ENCODE measurements at regions of chr3 and their contacts with region 1.

Region 1: DNA sequence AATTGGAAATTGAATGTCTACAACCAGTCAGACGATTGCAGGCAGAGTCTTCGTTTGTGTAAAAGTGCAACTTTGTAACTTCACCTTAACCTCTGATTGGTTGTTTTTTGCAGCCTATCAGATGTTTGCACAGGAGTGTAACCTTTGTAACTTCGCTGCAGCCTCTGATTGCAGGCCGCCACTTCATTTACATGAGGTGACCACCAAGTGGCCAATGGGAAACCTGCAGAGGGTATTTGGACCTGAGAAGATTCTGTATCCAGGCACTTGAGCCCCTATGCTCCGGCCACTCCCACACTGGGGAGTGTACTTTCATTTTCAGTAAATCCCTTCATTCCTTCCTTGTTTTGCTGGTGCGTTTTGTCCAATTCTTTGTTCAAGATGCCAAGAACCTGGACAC is 68.1 kb upstream of the PFN2 start:
- DNase-seq: no peak
- H3K4me3 ChIP-seq: no peak overlapping the region
- H3K27ac ChIP-seq: no peak overlapping the region
- H3K4me1 ChIP-seq: no peaks in the 10 kb centered on the region
- H3K27me3 ChIP-seq: no peaks in the 10 kb centered on the region
- CTCF ChIP-seq: no peak

Region 2: DNA sequence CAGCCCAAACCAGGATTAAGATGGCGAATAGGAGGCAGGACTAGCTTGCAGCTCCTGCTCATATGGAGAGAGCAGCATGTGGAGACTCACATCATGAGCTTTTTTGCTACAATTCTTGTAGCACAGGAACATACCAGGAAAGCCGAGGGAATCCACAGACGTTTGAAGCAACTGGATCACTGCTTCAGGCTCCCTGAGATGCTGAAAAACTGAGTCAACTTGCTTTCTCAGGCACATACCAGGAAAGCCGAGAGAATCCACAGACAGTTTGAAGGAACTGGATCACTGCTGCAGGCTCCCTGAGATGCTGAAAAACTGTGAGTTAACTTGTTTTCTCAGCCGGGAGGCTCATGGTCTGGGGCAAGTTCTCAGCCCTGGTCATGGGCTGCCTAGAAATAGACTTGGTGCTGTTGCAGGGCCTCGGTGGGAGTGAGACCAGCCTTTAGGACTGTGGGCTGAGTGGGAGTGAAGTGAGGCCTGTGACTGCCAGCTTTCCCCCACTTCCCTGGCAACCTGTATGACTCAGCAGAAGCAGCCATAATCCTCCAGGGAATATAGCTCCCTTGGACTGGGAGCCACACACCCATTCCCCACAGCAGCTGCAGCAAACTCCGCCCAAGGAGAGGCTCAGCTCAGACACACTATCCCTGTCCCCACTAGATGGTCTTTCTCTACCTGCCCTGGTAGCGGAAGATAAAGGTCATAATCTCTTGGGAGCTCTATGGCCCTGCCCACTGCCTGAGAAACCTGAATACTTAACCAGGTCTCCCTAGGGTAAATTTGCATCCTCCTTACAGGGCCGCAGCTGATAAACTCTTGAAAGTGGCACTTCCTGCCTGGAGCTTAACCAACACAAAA is 16.2 kb before region 1 on chr3:
- CTCF ChIA-PET with region 1: no interaction called
- dilution Hi-C with region 1: no loop called
- in situ Hi-C with region 1: no loop called
- intact Hi-C with region 1: loop called (anchors 2 kb)
- DNase-seq: peak; percentile 10
- H3K4me3 ChIP-seq: no peak overlapping the region
- H3K27ac ChIP-seq: no peak overlapping the region
- H3K4me1 ChIP-seq: no peaks in the 10 kb centered on the region
- H3K27me3 ChIP-seq: no peaks in the 10 kb centered on the region
- CTCF ChIP-seq: no peak

Region 3: GRCh38 chr3:150074697-150075416 is 36.0 kb after region 1 on chr3:
- CTCF ChIA-PET with region 1: no interaction called
- dilution Hi-C with region 1: no loop called
- in situ Hi-C with region 1: no loop called
- intact Hi-C with region 1: no loop called
- DNase-seq: no peak
- H3K4me3 ChIP-seq: no peak overlapping the region
- H3K27ac ChIP-seq: no peak overlapping the region
- H3K4me1 ChIP-seq: peaks cover 25% of the 10 kb centered on the region
- H3K27me3 ChIP-seq: no peaks in the 10 kb centered on the region
- CTCF ChIP-seq: no peak

Region 4: DNA sequence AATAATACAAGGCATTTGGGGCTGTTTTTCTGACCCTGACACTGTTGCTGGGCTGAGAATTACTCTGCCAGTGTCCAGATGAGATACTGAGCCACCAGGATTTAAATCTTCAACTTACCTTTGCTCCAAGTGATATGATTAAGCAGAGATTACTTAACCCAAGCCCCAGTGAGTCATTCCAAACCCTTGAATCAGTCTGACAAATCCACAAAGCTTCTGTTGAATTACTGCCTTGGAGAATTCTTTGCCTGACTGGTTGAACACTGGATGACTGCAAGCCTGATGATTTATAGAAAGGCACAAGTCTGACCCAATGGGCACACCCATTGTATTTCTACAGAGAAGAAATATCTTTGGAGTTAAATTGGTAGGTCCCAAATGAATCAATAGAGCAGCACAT is 281.1 kb after region 1 on chr3:
- CTCF ChIA-PET with region 1: no interaction called
- dilution Hi-C with region 1: no loop called
- in situ Hi-C with region 1: no loop called
- intact Hi-C with region 1: no loop called
- DNase-seq: peak; percentile 98
- H3K4me3 ChIP-seq: no peak overlapping the region
- H3K27ac ChIP-seq: peak overlapping the region; percentile 66
- H3K4me1 ChIP-seq: peaks cover 7% of the 10 kb centered on the region
- H3K27me3 ChIP-seq: no peaks in the 10 kb centered on the region
- CTCF ChIP-seq: no peak

Region 5: DNA sequence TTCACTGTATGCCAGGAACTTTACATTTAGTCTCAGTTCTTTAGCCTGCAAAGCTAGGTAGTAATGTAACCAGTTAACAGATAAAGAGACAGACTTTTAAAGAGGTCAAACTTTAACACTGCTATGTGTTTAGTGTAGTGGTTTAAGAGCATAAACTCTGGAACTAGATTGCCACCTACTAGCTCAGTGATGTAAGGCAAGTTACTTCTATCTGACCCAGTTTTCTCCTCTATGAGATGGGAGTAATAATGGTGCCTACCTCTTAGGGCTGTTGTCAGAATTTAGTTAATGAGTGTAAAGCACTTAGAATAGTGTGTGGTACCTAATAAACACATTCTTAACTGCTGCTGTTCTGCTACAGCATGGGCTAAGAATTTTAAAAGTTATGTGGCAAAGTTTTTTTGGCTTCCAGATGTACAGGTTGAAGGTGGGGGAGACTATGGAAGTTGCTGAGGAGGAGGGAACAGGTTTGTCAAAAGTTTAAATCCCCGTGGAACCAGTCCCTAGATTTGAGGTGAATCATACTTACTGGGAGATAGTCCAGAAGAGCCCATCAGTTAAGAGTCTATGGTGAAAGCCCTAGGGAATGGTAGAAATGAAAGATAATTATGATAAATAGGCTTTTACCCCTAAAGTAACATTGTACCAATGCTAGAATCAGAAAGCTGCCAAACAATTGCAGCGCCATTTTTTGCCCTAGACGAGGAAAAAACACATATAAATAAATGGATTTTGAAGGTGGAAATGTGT is 383.1 kb after region 1 on chr3:
- CTCF ChIA-PET with region 1: no interaction called
- dilution Hi-C with region 1: no loop called
- in situ Hi-C with region 1: no loop called
- intact Hi-C with region 1: no loop called
- DNase-seq: peak; percentile 49
- H3K4me3 ChIP-seq: no peak overlapping the region
- H3K27ac ChIP-seq: no peak overlapping the region
- H3K4me1 ChIP-seq: peaks cover 20% of the 10 kb centered on the region
- H3K27me3 ChIP-seq: no peaks in the 10 kb centered on the region
- CTCF ChIP-seq: no peak

Region 6: GRCh38 chr3:150666167-150666566 is 627.3 kb after region 1 on chr3:
- CTCF ChIA-PET with region 1: no interaction called
- dilution Hi-C with region 1: no loop called
- in situ Hi-C with region 1: no loop called
- intact Hi-C with region 1: no loop called
- DNase-seq: no peak
- H3K4me3 ChIP-seq: no peak overlapping the region
- H3K27ac ChIP-seq: no peak overlapping the region
- H3K4me1 ChIP-seq: no peaks in the 10 kb centered on the region
- H3K27me3 ChIP-seq: peaks cover 3% of the 10 kb centered on the region
- CTCF ChIP-seq: no peak

Measured in mammary epithelial cell (primary cell).